Calu3 (cell line): ENCODE measurements at regions of chr20 and their contacts with region 1.

Region 1: GRCh38 chr20:50762435-50763201 is 31.2 kb downstream of the PARD6B start:
- DNase-seq: peak; percentile 73
- H3K4me3 Mint-ChIP-seq: peak overlapping the region; percentile 73
- H3K27ac Mint-ChIP-seq: peak overlapping the region; percentile 100
- H3K4me1 Mint-ChIP-seq: peaks cover 85% of the 10 kb centered on the region
- H3K27me3 Mint-ChIP-seq: no peaks in the 10 kb centered on the region
- CTCF ChIP-seq: no peak

Region 2: GRCh38 chr20:50478162-50479036 is 284.2 kb before region 1 on chr20:
- CTCF ChIA-PET with region 1: no interaction called
- intact Hi-C with region 1: loop called (anchors 10 kb)
- DNase-seq: peak; percentile 64
- H3K4me3 Mint-ChIP-seq: no peak overlapping the region
- H3K27ac Mint-ChIP-seq: no peak overlapping the region
- H3K4me1 Mint-ChIP-seq: peaks cover 15% of the 10 kb centered on the region
- H3K27me3 Mint-ChIP-seq: no peaks in the 10 kb centered on the region
- CTCF ChIP-seq: peak; percentile 61

Region 3: GRCh38 chr20:50744143-50744792 is 18.4 kb before region 1 on chr20:
- CTCF ChIA-PET with region 1: interaction called, 17 read pairs
- intact Hi-C with region 1: loop called (anchors 1 kb)
- DNase-seq: peak; percentile 73
- H3K4me3 Mint-ChIP-seq: peak overlapping the region; percentile 63
- H3K27ac Mint-ChIP-seq: peak overlapping the region; percentile 90
- H3K4me1 Mint-ChIP-seq: peaks cover 88% of the 10 kb centered on the region
- H3K27me3 Mint-ChIP-seq: no peaks in the 10 kb centered on the region
- CTCF ChIP-seq: no peak

Region 4: DNA sequence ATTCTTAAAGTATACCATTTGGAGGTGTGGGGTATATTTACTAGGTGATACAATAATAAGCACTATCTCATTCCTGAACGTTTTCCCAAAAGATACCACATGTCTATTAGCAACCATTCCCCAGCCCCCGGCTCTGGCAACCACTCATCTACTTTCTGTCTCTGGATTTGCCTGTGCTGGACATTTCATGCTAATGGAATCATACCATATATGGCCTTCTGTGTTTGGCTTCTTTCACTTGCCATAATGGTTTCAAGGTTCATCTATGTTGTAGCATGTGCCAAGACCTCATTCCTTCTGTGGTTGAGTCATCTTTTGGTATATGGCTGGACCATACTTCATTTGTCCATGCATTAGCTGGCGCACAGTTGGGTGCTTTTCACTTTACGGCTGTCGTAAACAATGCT is 72.0 kb after region 1 on chr20:
- CTCF ChIA-PET with region 1: no interaction called
- intact Hi-C with region 1: no loop called
- DNase-seq: no peak
- H3K4me3 Mint-ChIP-seq: no peak overlapping the region
- H3K27ac Mint-ChIP-seq: no peak overlapping the region
- H3K4me1 Mint-ChIP-seq: no peaks in the 10 kb centered on the region
- H3K27me3 Mint-ChIP-seq: no peaks in the 10 kb centered on the region
- CTCF ChIP-seq: no peak